Natural killer cell (primary cell): ENCODE measurements at regions of chr17 and their contacts with region 1.

Region 1: GRCh38 chr17:35849469-35850348 is 19.0 kb downstream of the HEATR9 start:
- DNase-seq: peak; percentile 44 to 86
- ATAC-seq: peak; percentile 81 to 96 (median 92)
- H3K4me3 ChIP-seq: no peak overlapping the region
- H3K4me3 Mint-ChIP-seq: peak overlapping the region; percentile 62
- H3K27ac ChIP-seq: peak overlapping the region; percentile 27
- H3K27ac Mint-ChIP-seq: peak overlapping the region; percentile 59 to 68
- H3K4me1 ChIP-seq: peaks cover 18% of the 10 kb centered on the region
- H3K4me1 Mint-ChIP-seq: peaks cover 27 to 41% of the 10 kb centered on the region in 2 donors
- H3K27me3 ChIP-seq: no peaks in the 10 kb centered on the region
- H3K27me3 Mint-ChIP-seq: no peaks in the 10 kb centered on the region
- CTCF ChIP-seq: peak; percentile 92

Region 2: DNA sequence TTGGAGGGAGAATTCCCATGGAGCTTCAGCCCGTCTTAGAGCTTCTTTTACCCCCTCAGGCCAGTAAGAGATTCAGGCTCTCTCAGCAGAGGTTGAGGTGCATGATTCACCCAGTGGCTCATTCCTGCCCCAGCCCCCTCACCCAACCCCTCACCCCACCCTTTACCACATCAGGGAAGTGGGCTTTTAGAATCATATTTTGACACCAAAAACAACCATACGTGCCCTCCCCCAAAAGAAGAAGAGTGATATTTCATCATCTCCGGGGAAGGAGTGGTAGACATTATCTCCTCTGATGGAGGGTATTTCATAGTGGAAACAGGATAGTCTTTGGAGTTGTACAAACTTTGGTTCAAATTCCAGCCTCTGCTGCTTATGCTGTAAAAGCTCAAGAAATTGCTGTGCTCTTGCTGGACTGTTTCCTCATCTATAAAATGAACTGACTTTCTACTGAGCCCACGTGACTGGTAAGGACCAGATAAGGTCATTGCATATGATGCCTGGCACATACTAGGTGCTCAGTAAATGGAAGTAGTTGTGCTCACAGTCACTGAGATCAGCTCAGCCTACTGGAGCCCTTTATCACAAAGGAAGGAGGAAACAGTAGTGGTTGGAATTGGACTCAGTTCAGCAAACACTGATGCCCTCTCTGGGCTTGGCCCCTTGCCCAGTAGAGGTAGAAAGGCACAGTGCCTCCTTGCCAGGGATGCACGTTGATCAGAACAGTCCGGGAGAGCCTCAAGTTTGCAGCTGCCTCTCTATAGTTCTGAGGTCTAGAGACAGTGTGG is 48.8 kb after region 1 on chr17:
- intact Hi-C with region 1: loop called (anchors 5 kb)
- DNase-seq: peak in 1 of 2 donors; percentile 45
- ATAC-seq: peak; percentile 2 to 49 (median 25)
- H3K4me3 ChIP-seq: no peak overlapping the region
- H3K4me3 Mint-ChIP-seq: peak overlapping the region; percentile 82
- H3K27ac ChIP-seq: peak overlapping the region; percentile 76
- H3K27ac Mint-ChIP-seq: peak overlapping the region; percentile 96 to 97
- H3K4me1 ChIP-seq: peaks cover 98% of the 10 kb centered on the region
- H3K4me1 Mint-ChIP-seq: peaks cover 84 to 91% of the 10 kb centered on the region in 2 donors
- H3K27me3 ChIP-seq: no peaks in the 10 kb centered on the region
- H3K27me3 Mint-ChIP-seq: no peaks in the 10 kb centered on the region
- CTCF ChIP-seq: no peak

Region 3: GRCh38 chr17:35930211-35931065 is 80.7 kb after region 1 on chr17 and contains the start of gene RDM1:
- intact Hi-C with region 1: loop called (anchors 5 kb)
- DNase-seq: peak; percentile 67 to 86
- ATAC-seq: peak; percentile 84 to 97 (median 96)
- H3K4me3 ChIP-seq: peak within 1 kb of the TSS; percentile 35
- H3K4me3 Mint-ChIP-seq: peak within 1 kb of the TSS; percentile 89
- H3K27ac ChIP-seq: no peak within 1 kb of the TSS
- H3K27ac Mint-ChIP-seq: peak within 1 kb of the TSS; percentile 84 to 87
- H3K4me1 ChIP-seq: peaks cover 14% of the 10 kb centered on the region
- H3K4me1 Mint-ChIP-seq: peaks cover 26 to 28% of the 10 kb centered on the region in 2 donors
- H3K27me3 ChIP-seq: no peaks in the 10 kb centered on the region
- H3K27me3 Mint-ChIP-seq: no peaks in the 10 kb centered on the region
- CTCF ChIP-seq: no peak
- total RNA-seq, gene RDM1: 0.48 to 1.00 (median 0.61) TPM

Region 4: GRCh38 chr17:35947156-35947585 is 97.5 kb after region 1 on chr17:
- intact Hi-C with region 1: loop called (anchors 1 kb)
- DNase-seq: peak; percentile 33 to 73
- ATAC-seq: peak; percentile 87 to 99 (median 98)
- H3K4me3 ChIP-seq: no peak overlapping the region
- H3K4me3 Mint-ChIP-seq: peak overlapping the region; percentile 9
- H3K27ac ChIP-seq: no peak overlapping the region
- H3K27ac Mint-ChIP-seq: peak overlapping the region in 1 of 2 donors; percentile 40
- H3K4me1 ChIP-seq: peaks cover 10% of the 10 kb centered on the region
- H3K4me1 Mint-ChIP-seq: peaks cover 7 to 21% of the 10 kb centered on the region in 2 donors
- H3K27me3 ChIP-seq: no peaks in the 10 kb centered on the region
- H3K27me3 Mint-ChIP-seq: no peaks in the 10 kb centered on the region
- CTCF ChIP-seq: peak; percentile 73